MCF 10A (cell line): ENCODE measurements at regions of chr7 and their contacts with region 1.

Region 1: DNA sequence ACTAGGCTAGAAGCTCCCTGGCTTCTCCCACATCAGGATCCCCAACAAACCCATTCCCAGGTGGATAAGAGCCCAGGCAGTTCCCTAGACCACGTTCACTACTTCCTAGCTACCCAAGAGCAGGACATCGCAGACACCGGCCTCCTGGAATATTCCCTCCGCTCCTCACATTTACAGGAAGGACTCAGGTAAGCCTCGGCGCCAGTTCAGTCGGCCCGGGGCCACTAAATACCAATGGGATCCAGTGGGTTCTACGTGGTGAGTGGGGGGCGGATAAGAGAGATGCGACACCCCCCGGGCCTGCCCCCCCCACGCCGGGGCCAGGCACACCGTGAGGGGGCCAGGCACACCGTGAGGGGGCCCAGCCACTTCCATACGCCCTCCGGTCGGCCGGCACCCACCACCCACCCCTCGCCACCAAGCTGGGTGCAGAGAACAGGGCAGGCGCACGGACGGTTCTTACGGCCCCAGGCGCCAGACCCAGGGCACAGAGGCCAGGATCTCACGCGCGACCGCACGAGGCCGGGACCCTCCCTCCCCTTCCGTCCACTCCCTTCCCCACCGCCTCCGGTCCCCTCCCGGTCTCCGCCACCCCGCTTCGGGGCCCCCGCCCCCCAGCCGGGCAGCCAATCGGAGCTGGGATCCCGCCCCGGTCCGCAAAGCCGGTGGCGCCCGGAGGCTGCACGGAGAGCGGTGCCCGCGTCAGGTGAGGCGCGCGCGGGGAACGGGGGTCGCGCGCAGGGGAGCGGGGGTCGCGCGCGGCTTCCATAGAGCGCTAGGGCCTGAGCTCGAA is at the start of gene BLVRA:
- DNase-seq: peak; percentile 50
- H3K4me3 Mint-ChIP-seq: peak within 1 kb of the TSS; percentile 72
- H3K27ac Mint-ChIP-seq: peak within 1 kb of the TSS; percentile 83
- H3K4me1 Mint-ChIP-seq: peaks cover 41% of the 10 kb centered on the region
- H3K27me3 Mint-ChIP-seq: no peaks in the 10 kb centered on the region
- CTCF ChIP-seq: no peak
- total RNA-seq, gene BLVRA: 41.2 and 46.0 TPM in 2 replicates

Region 2: DNA sequence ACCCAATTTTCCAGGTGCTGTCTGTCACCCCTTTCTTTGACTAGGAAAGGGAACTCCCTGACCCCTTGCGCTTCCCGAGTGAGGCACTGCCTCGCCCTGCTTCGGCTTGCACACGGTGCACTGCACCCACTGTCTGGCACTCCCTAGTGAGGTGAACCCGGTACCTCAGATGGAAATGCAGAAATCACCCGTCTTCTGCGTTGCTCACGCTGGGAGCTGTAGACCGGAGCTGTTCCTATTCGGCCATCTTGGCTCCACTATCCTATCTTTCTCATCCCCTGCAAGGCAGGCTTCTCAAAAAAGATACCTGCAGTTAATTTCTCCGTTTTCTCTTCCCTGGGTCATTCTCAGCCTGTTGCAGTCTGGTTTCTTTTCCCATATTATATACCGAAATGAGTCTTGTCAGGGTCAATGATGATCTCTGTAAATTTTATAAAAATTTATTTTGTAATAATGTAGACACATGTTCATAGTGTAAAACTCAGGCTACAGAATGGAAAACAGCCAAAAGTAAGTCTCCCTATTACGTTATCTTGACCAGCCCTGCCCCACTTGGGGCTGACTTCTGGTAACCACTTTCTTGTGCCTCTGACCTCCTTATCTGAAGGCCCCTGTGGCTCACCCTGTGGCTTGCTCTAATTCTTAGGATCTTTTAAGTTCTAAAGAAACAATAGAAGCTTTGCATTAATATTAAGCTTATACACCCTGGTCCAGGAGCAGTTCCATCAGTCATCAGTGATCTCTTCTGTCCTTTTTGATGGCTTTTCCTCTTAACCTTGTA is 21.0 kb after region 1 on chr7:
- CTCF ChIA-PET with region 1: interaction called, 4 read pairs
- POLR2A ChIA-PET with region 1: interaction called, 132 read pairs
- intact Hi-C with region 1: no loop called
- DNase-seq: peak; percentile 56
- H3K4me3 Mint-ChIP-seq: peak overlapping the region; percentile 72
- H3K27ac Mint-ChIP-seq: peak overlapping the region; percentile 90
- H3K4me1 Mint-ChIP-seq: peaks cover 18% of the 10 kb centered on the region
- H3K27me3 Mint-ChIP-seq: no peaks in the 10 kb centered on the region
- CTCF ChIP-seq: no peak

Region 3: DNA sequence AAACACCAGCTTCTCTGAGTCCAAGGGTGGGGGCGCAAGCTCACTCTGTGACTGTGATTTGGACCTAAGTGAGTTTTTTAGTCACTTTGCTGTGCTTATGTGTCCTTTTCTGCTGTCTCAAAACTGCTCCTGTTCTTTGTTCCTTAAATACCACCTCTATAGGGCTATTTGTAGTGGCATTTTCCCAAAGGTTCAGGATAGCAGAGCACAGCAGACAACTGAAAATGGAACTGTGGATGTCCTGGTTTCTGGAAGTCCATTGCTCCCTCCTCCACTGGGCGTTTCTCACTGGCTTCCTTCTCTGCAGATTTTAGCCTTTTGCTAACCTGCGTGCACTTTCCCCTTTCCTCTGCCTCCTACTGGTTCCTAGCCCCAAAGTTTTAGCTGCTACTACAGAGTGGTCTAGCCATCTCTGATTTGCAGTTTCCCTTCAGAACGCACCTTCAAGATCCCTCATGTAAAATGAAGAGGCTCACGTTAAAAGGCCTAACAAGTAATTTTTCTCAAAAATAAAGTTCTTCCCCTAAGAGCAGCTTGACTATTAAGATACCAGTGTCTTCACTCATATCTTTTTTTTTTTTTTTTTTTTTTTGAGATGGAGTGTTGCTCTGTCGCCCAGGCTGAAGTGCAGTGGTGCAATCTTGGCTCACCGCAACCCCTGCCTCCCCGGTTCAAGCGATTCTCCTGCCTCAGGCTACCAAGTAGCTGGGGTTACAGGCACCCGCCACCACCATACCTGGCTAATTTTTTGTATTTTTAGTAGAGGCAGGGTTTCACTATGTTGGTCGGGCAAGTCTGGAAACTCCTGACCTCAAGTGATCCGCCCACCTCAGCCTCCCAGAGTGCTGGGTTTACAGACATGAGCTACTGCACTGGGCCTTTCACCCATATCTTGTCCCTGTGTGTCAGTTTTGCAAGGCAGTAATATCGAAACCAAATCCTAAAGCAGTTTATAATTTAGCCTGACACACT is 26.1 kb after region 1 on chr7:
- CTCF ChIA-PET with region 1: interaction called, 4 read pairs
- POLR2A ChIA-PET with region 1: interaction called, 132 read pairs
- intact Hi-C with region 1: no loop called
- DNase-seq: no peak
- H3K4me3 Mint-ChIP-seq: no peak overlapping the region
- H3K27ac Mint-ChIP-seq: no peak overlapping the region
- H3K4me1 Mint-ChIP-seq: peaks cover 24% of the 10 kb centered on the region
- H3K27me3 Mint-ChIP-seq: no peaks in the 10 kb centered on the region
- CTCF ChIP-seq: no peak